CD4-positive, alpha-beta memory T cell (primary cell): ENCODE measurements at regions of chr21 and their contacts with region 1.

Region 1: GRCh38 chr21:24456358-24456757 is 1150.9 kb downstream of the MRPL39 start:
- DNase-seq: no peak
- H3K4me3 ChIP-seq: no peak overlapping the region
- H3K4me3 Mint-ChIP-seq: no peak overlapping the region
- H3K27ac ChIP-seq: no peak overlapping the region
- H3K27ac Mint-ChIP-seq: no peak overlapping the region
- H3K4me1 ChIP-seq: no peaks in the 10 kb centered on the region
- H3K4me1 Mint-ChIP-seq: no peaks in the 10 kb centered on the region
- H3K27me3 ChIP-seq: no peaks in the 10 kb centered on the region
- H3K27me3 Mint-ChIP-seq: no peaks in the 10 kb centered on the region

Region 2: DNA sequence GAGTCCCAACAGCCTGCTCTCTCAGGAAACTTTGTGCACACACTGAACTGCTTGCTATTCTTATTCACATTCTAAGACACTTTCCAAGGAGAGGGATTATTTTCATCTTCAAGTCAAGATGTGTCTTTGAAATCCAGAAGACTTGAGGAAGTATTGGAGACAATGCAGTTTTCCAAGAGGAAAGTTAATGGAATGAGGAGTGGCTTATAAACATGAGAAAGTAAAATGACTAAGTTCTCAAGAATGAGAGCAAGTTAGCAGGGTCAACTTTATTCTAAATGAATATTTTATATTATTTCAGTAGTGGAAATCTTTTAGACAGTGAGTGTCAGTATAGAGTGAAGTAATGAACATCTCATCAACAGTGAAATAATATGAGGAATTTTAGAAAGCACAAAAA is 88.4 kb before region 1 on chr21:
- CTCF ChIA-PET with region 1: no interaction called
- POLR2A ChIA-PET with region 1: no interaction called
- intact Hi-C with region 1: no loop called
- DNase-seq: no peak
- H3K4me3 ChIP-seq: no peak overlapping the region
- H3K4me3 Mint-ChIP-seq: no peak overlapping the region
- H3K27ac ChIP-seq: no peak overlapping the region
- H3K27ac Mint-ChIP-seq: no peak overlapping the region
- H3K4me1 ChIP-seq: no peaks in the 10 kb centered on the region
- H3K4me1 Mint-ChIP-seq: no peaks in the 10 kb centered on the region
- H3K27me3 ChIP-seq: no peaks in the 10 kb centered on the region
- H3K27me3 Mint-ChIP-seq: no peaks in the 10 kb centered on the region

Region 3: DNA sequence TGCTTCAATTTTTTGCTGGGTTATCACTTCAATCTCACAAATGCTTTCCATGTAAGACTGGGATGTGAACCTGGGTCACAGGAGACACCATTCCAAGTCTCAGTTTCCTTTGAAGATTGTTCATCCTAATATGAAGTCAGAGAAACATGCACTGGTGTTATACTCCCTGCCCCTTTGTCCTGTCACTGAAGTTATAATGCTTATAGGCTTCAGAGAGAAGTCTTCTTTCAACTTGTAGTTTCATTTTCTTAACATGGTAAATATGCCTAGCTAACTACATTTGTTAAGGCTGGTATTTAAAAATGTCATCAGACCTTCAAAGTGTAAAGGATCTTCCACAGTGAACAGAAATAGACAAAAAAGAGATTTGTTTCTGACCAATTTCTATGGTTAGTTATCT is 44.9 kb before region 1 on chr21:
- CTCF ChIA-PET with region 1: no interaction called
- POLR2A ChIA-PET with region 1: no interaction called
- intact Hi-C with region 1: loop called (anchors 5 kb)
- DNase-seq: no peak
- H3K4me3 ChIP-seq: no peak overlapping the region
- H3K4me3 Mint-ChIP-seq: no peak overlapping the region
- H3K27ac ChIP-seq: no peak overlapping the region
- H3K27ac Mint-ChIP-seq: no peak overlapping the region
- H3K4me1 ChIP-seq: no peaks in the 10 kb centered on the region
- H3K4me1 Mint-ChIP-seq: no peaks in the 10 kb centered on the region
- H3K27me3 ChIP-seq: no peaks in the 10 kb centered on the region
- H3K27me3 Mint-ChIP-seq: no peaks in the 10 kb centered on the region

Region 4: GRCh38 chr21:24545807-24546361 is 89.5 kb after region 1 on chr21:
- CTCF ChIA-PET with region 1: no interaction called
- POLR2A ChIA-PET with region 1: no interaction called
- intact Hi-C with region 1: no loop called
- DNase-seq: no peak
- H3K4me3 ChIP-seq: no peak overlapping the region
- H3K4me3 Mint-ChIP-seq: no peak overlapping the region
- H3K27ac ChIP-seq: no peak overlapping the region
- H3K27ac Mint-ChIP-seq: no peak overlapping the region
- H3K4me1 ChIP-seq: no peaks in the 10 kb centered on the region
- H3K4me1 Mint-ChIP-seq: no peaks in the 10 kb centered on the region
- H3K27me3 ChIP-seq: no peaks in the 10 kb centered on the region
- H3K27me3 Mint-ChIP-seq: no peaks in the 10 kb centered on the region